GM12878 (cell line): ENCODE measurements at regions of chrX and their contacts with region 1.

Region 1: GRCh38 chrX:44474410-44474809 is 68.2 kb downstream of the FUNDC1 start:
- DNase-seq: no peak
- ATAC-seq: no peak
- H3K4me3 ChIP-seq: no peak overlapping the region
- H3K27ac ChIP-seq: no peak overlapping the region
- H3K4me1 ChIP-seq: no peaks in the 10 kb centered on the region
- H3K27me3 ChIP-seq: no peaks in the 10 kb centered on the region
- CTCF ChIP-seq: no peak
- EP300 ChIP-seq: no peak
- POLR2A ChIP-seq: no peak
- RAD21 ChIP-seq: no peak

Region 2: DNA sequence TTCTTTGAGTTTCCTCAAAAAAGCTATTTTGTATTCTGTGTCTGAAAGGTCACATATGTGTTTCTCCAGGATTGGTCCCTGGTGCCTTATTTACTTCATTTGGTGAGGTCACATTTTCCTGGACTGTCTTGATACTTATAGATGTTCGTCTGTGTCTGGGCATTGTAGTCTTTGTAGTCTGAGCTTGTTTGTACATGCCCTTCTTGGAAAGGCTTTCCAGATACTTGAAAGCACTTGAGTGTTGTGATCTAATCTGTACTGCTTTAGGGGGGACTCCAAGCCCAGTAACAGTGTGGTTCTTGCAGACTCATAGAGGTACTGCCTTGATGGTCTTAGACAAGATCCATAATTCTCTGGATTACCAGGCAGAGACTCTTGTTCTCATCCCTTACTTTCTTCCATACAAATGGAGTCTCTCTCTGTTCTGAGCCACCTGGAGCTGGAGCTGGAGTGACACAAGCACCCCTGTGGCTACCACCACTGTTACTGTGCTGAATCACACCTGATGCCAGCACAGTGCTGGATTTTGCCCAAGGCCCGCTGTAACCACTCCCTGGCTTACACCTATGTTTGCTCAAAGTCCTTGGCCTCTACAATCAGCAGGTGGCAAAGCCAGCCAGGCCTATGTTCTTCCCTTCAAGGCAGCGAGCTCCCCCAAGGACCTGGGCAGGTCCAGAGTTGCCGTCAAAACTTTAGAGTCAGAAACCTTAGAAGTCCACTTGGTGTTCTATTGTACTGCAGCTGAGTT is 58.6 kb before region 1 on chrX:
- CTCF ChIA-PET with region 1: no interaction called
- POLR2A ChIA-PET with region 1: no interaction called
- RAD21 ChIA-PET with region 1: no interaction called
- SMC1A ChIA-PET with region 1: no interaction called
- in situ Hi-C with region 1: no loop called
- intact Hi-C with region 1: loop called (anchors 10 kb)
- DNase-seq: no peak
- ATAC-seq: no peak
- H3K4me3 ChIP-seq: no peak overlapping the region
- H3K27ac ChIP-seq: no peak overlapping the region
- H3K4me1 ChIP-seq: no peaks in the 10 kb centered on the region
- H3K27me3 ChIP-seq: no peaks in the 10 kb centered on the region
- CTCF ChIP-seq: no peak
- EP300 ChIP-seq: no peak
- POLR2A ChIP-seq: no peak
- RAD21 ChIP-seq: no peak